ENCODE measurements at regions of chr15 and their contacts with region 1.

Region 1: GRCh38 chr15:60585743-60586708 is 107.1 kb upstream of the ICE2 start:
- DNase-seq: peak in 6 of 9 experiments; percentile 63 to 90 (median 66)
- ATAC-seq: peak; percentile 13
- H3K4me3 ChIP-seq: no peak overlapping the region
- H3K4me3 Mint-ChIP-seq: peak overlapping the region; percentile 77
- H3K27ac ChIP-seq: peak overlapping the region in 1 of 2 experiments; percentile 85
- H3K27ac Mint-ChIP-seq: peak overlapping the region; percentile 92
- H3K4me1 ChIP-seq: peaks cover 89% of the 10 kb centered on the region
- H3K4me1 Mint-ChIP-seq: peaks cover 91% of the 10 kb centered on the region
- H3K27me3 ChIP-seq: no peaks in the 10 kb centered on the region
- H3K27me3 Mint-ChIP-seq: no peaks in the 10 kb centered on the region
- CTCF ChIP-seq: peak; percentile 83

Region 2: DNA sequence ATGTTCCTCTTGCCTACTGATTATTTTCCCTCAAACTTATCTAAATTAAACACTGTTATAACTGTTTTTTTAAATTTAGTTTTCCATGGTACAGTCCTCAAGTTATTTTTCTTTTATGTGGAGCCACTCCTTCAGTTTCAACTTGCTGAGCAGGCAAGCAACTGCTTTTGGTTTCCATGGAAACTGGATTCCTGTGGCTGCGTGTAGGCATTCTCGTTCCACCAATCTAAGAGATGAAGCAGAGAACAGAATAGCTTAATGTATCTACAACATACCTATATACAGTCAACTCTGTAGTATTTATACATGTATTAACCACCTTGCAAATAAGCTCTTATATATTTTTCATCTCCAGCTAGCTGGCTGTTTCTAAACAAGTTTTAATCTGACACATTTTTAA is 162.5 kb before region 1 on chr15:
- CTCF ChIA-PET with region 1: no interaction called
- POLR2A ChIA-PET with region 1: no interaction called
- intact Hi-C with region 1: no loop called
- DNase-seq: no peak
- ATAC-seq: no peak
- H3K4me3 ChIP-seq: no peak overlapping the region
- H3K4me3 Mint-ChIP-seq: no peak overlapping the region
- H3K27ac ChIP-seq: no peak overlapping the region
- H3K27ac Mint-ChIP-seq: peak overlapping the region; percentile 15
- H3K4me1 ChIP-seq: no peaks in the 10 kb centered on the region
- H3K4me1 Mint-ChIP-seq: no peaks in the 10 kb centered on the region
- H3K27me3 ChIP-seq: no peaks in the 10 kb centered on the region
- H3K27me3 Mint-ChIP-seq: no peaks in the 10 kb centered on the region
- CTCF ChIP-seq: no peak

Region 3: GRCh38 chr15:60520825-60521368 is 65.1 kb before region 1 on chr15:
- CTCF ChIA-PET with region 1: interaction called, 47 read pairs
- POLR2A ChIA-PET with region 1: interaction called, 14 read pairs
- intact Hi-C with region 1: loop called (anchors 2 to 5 kb)
- DNase-seq: peak; percentile 70 to 87 (median 84)
- ATAC-seq: peak; percentile 88
- H3K4me3 ChIP-seq: no peak overlapping the region
- H3K4me3 Mint-ChIP-seq: peak overlapping the region; percentile 15
- H3K27ac ChIP-seq: no peak overlapping the region
- H3K27ac Mint-ChIP-seq: peak overlapping the region; percentile 84
- H3K4me1 ChIP-seq: peaks cover 9% of the 10 kb centered on the region
- H3K4me1 Mint-ChIP-seq: peaks cover 63% of the 10 kb centered on the region
- H3K27me3 ChIP-seq: no peaks in the 10 kb centered on the region
- H3K27me3 Mint-ChIP-seq: no peaks in the 10 kb centered on the region
- CTCF ChIP-seq: peak; percentile 94

Region 4: GRCh38 chr15:60548101-60548500 is 37.9 kb before region 1 on chr15:
- CTCF ChIA-PET with region 1: interaction called, 45 read pairs
- POLR2A ChIA-PET with region 1: interaction called, 15 read pairs
- intact Hi-C with region 1: loop called (anchors 5 kb)
- DNase-seq: peak in 5 of 9 experiments; percentile 38 to 71 (median 48)
- ATAC-seq: peak; percentile 67
- H3K4me3 ChIP-seq: peak overlapping the region in 1 of 2 experiments; percentile 0
- H3K4me3 Mint-ChIP-seq: peak overlapping the region; percentile 57
- H3K27ac ChIP-seq: peak overlapping the region in 1 of 2 experiments; percentile 84
- H3K27ac Mint-ChIP-seq: peak overlapping the region; percentile 89
- H3K4me1 ChIP-seq: peaks cover 90% of the 10 kb centered on the region
- H3K4me1 Mint-ChIP-seq: peaks cover 92% of the 10 kb centered on the region
- H3K27me3 ChIP-seq: no peaks in the 10 kb centered on the region
- H3K27me3 Mint-ChIP-seq: no peaks in the 10 kb centered on the region
- CTCF ChIP-seq: no peak

Region 5: GRCh38 chr15:60573936-60574335 is 12.1 kb before region 1 on chr15:
- CTCF ChIA-PET with region 1: interaction called, 20 read pairs
- POLR2A ChIA-PET with region 1: interaction called, 33 read pairs
- intact Hi-C with region 1: loop called in 1 of 2 experiments (anchors 2 kb)
- DNase-seq: peak in 5 of 9 experiments; percentile 48 to 76 (median 71)
- ATAC-seq: peak; percentile 79
- H3K4me3 ChIP-seq: peak overlapping the region in 1 of 2 experiments; percentile 8
- H3K4me3 Mint-ChIP-seq: peak overlapping the region; percentile 79
- H3K27ac ChIP-seq: peak overlapping the region in 1 of 2 experiments; percentile 68
- H3K27ac Mint-ChIP-seq: peak overlapping the region; percentile 97
- H3K4me1 ChIP-seq: peaks cover 96% of the 10 kb centered on the region
- H3K4me1 Mint-ChIP-seq: peaks cover 91% of the 10 kb centered on the region
- H3K27me3 ChIP-seq: no peaks in the 10 kb centered on the region
- H3K27me3 Mint-ChIP-seq: no peaks in the 10 kb centered on the region
- CTCF ChIP-seq: no peak

Region 6: GRCh38 chr15:60635507-60636352 is 49.7 kb after region 1 on chr15:
- CTCF ChIA-PET with region 1: no interaction called
- POLR2A ChIA-PET with region 1: no interaction called
- intact Hi-C with region 1: no loop called
- DNase-seq: no peak
- ATAC-seq: no peak
- H3K4me3 ChIP-seq: no peak overlapping the region
- H3K4me3 Mint-ChIP-seq: no peak overlapping the region
- H3K27ac ChIP-seq: no peak overlapping the region
- H3K27ac Mint-ChIP-seq: no peak overlapping the region
- H3K4me1 ChIP-seq: no peaks in the 10 kb centered on the region
- H3K4me1 Mint-ChIP-seq: peaks cover 12% of the 10 kb centered on the region
- H3K27me3 ChIP-seq: no peaks in the 10 kb centered on the region
- H3K27me3 Mint-ChIP-seq: no peaks in the 10 kb centered on the region
- CTCF ChIP-seq: no peak

Region 7: DNA sequence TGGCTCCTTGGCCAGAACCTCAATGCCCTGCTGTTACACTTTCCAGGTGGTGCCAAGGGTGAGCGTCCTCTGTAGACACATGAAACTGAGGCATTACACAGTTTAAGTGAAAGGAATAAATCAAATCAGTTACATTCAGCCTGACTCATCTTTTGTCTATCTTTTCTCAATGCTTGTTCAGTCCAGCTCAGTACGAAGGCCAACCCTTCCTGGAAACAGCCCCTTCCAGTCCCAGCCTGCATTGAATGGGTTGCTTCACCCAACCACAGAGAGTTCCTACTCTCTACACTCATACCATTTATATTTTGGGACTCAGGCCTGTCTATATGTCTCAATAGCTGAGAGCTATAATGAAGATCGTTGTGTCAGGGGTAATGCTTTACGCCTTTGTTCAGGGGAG is 279.5 kb after region 1 on chr15:
- CTCF ChIA-PET with region 1: interaction called, 71 read pairs
- POLR2A ChIA-PET with region 1: interaction called, 9 read pairs
- intact Hi-C with region 1: loop called (anchors 1 to 2 kb)
- DNase-seq: no peak
- ATAC-seq: no peak
- H3K4me3 ChIP-seq: no peak overlapping the region
- H3K4me3 Mint-ChIP-seq: no peak overlapping the region
- H3K27ac ChIP-seq: no peak overlapping the region
- H3K27ac Mint-ChIP-seq: no peak overlapping the region
- H3K4me1 ChIP-seq: peaks cover 7% of the 10 kb centered on the region
- H3K4me1 Mint-ChIP-seq: peaks cover 26% of the 10 kb centered on the region
- H3K27me3 ChIP-seq: no peaks in the 10 kb centered on the region
- H3K27me3 Mint-ChIP-seq: no peaks in the 10 kb centered on the region
- CTCF ChIP-seq: no peak

Region 8: DNA sequence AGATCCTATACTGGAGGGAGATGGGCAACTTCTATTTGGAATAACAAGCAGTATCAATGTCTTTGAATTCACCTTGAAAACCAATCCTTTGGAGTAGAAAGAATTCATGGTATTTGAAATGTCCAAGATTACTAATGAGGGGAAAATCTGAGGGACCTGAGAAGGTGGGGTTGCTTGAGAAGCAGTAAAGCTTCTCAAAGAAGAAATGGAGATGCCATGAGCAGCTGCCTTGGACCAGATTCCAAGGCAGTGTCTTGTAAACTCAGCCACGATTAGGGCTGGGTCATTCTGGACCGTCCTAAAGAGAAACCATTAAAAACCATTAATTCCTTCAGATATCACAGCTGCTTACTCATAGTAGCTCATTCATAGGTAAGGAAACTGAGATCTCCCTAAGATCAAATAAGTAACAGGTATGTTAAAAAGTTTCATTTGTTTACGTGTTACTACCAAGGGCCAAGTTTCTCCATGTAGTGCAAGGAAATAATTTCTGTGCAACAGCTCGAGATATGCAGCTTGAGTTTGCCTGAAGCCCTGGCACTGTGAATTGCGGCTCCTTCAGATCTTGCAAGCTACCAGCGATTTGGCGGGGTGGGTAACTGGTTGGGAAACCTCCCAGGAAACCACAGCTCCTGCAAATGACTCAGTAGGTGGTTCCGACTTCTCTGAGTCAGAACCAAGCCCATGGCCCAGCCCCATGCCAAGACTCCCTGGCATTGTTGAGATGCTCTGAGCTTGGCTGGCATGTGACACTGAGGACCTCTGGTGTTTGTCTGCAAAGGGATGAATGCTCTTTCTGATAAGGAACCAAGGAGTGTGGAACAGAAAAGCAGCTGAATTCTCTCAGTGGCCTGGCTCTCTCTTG is 346.3 kb after region 1 on chr15:
- CTCF ChIA-PET with region 1: interaction called, 13 read pairs
- POLR2A ChIA-PET with region 1: no interaction called
- intact Hi-C with region 1: no loop called
- DNase-seq: peak; percentile 6 to 77 (median 52)
- ATAC-seq: peak; percentile 73
- H3K4me3 ChIP-seq: no peak overlapping the region
- H3K4me3 Mint-ChIP-seq: no peak overlapping the region
- H3K27ac ChIP-seq: no peak overlapping the region
- H3K27ac Mint-ChIP-seq: no peak overlapping the region
- H3K4me1 ChIP-seq: peaks cover 8% of the 10 kb centered on the region
- H3K4me1 Mint-ChIP-seq: peaks cover 7% of the 10 kb centered on the region
- H3K27me3 ChIP-seq: no peaks in the 10 kb centered on the region
- H3K27me3 Mint-ChIP-seq: peaks cover 3% of the 10 kb centered on the region
- CTCF ChIP-seq: no peak

Region 9: GRCh38 chr15:61057376-61057775 is 471.4 kb after region 1 on chr15:
- CTCF ChIA-PET with region 1: no interaction called
- POLR2A ChIA-PET with region 1: no interaction called
- intact Hi-C with region 1: no loop called
- DNase-seq: no peak
- ATAC-seq: no peak
- H3K4me3 ChIP-seq: no peak overlapping the region
- H3K4me3 Mint-ChIP-seq: no peak overlapping the region
- H3K27ac ChIP-seq: no peak overlapping the region
- H3K27ac Mint-ChIP-seq: no peak overlapping the region
- H3K4me1 ChIP-seq: no peaks in the 10 kb centered on the region
- H3K4me1 Mint-ChIP-seq: no peaks in the 10 kb centered on the region
- H3K27me3 ChIP-seq: no peaks in the 10 kb centered on the region
- H3K27me3 Mint-ChIP-seq: peaks cover 2% of the 10 kb centered on the region
- CTCF ChIP-seq: no peak

Measured in CD8-positive, alpha-beta T cell (primary cell).